Aorta (tissue), 5 donors: ENCODE measurements at regions of chr4 and their contacts with region 1.

Region 1: DNA sequence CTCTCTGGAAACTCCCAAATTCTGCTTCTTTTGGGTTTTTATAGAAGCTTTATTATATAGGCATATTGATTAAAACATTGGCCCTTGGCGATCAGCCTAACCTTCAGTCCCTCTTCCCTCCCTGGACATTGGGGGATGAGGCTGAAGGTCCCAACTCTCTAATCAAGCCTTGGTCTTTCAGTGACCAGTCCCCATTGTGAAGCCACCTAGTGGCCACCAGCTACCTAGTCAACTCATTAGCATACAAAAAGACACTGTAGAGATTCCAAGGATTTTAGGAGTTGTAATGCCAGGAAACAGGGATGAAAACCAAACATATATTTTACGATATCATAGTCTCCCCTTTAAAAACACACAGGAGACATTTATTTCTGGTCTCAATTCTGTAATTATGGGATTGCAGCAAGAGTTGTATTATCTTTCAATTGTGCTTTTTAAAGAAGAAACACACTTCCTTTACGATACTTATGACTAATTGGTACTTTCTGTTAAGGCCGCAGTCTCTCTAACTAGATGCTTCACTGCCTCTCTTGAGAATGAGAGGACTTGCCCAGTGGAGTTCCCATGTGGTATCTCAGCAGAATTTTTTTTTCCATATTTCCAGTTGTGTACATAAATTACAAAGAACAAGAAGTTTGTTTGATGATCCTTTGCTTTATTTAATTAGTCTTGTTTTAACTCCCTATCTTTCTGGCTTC is 58.2 kb downstream of the WDR17 start:
- DNase-seq: no peak
- ATAC-seq: no peak
- H3K4me3 ChIP-seq: no peak overlapping the region
- H3K27ac ChIP-seq: no peak overlapping the region
- H3K4me1 ChIP-seq: no peaks in the 10 kb centered on the region
- H3K27me3 ChIP-seq: no peaks in the 10 kb centered on the region

Region 2: DNA sequence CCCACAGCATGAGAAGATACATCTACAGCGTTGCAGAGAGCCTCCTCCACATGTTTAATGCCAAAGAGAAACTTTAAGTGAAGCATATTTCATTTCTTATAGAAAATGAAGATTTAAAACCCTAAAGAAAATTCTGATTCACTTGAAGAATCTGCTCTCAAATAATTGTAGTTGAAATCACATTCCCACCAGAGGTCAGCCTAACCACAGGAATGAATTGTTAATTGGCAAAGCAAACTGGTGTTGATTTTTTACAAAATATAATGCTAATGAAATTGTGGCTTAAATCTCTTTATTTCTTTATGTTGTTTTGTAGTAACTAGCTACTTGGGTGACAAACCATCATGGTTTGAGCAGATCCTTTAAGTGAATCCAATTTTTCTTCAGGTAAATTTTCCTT is 89.4 kb before region 1 on chr4:
- intact Hi-C with region 1: loop called in 1 of 2 experiments (anchors 10 kb)
- DNase-seq: no peak
- ATAC-seq: no peak
- H3K4me3 ChIP-seq: no peak overlapping the region
- H3K27ac ChIP-seq: no peak overlapping the region
- H3K4me1 ChIP-seq: no peaks in the 10 kb centered on the region
- H3K27me3 ChIP-seq: no peaks in the 10 kb centered on the region

Region 3: DNA sequence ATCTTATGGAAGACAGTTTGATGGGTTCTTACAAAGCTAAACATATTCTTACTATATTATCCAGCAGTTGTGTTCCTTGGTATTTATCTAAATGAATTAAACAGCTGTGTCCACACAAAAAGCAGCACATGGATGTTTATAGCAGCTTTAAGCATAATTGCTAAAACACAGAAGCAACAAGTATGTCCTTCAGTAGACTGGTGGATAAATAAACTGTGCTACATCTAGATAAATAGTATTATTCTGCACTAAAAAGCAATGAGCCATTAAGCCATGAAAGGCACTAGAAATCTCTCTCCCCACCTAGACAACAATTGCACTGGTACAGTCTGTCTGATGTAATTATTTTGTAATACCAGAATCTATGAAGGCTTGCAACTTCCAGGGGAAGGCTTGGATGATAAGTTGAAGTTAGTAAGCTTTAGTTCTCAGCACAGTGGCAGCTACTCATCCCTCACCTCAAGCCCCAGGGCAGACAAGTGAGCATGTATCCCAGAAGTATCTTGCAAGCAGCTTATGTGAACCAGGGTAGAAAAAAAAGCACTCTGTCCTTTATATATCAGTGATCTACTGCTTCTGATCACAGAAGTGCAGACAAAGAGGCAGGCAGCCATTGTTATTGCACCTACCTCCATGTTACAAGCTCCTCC is 21.3 kb before region 1 on chr4:
- intact Hi-C with region 1: no loop called
- DNase-seq: no peak
- ATAC-seq: no peak
- H3K4me3 ChIP-seq: no peak overlapping the region
- H3K27ac ChIP-seq: no peak overlapping the region
- H3K4me1 ChIP-seq: no peaks in the 10 kb centered on the region
- H3K27me3 ChIP-seq: no peaks in the 10 kb centered on the region